Natural killer cell (primary cell): ENCODE measurements at regions of chr17 and their contacts with region 1.

Region 1: DNA sequence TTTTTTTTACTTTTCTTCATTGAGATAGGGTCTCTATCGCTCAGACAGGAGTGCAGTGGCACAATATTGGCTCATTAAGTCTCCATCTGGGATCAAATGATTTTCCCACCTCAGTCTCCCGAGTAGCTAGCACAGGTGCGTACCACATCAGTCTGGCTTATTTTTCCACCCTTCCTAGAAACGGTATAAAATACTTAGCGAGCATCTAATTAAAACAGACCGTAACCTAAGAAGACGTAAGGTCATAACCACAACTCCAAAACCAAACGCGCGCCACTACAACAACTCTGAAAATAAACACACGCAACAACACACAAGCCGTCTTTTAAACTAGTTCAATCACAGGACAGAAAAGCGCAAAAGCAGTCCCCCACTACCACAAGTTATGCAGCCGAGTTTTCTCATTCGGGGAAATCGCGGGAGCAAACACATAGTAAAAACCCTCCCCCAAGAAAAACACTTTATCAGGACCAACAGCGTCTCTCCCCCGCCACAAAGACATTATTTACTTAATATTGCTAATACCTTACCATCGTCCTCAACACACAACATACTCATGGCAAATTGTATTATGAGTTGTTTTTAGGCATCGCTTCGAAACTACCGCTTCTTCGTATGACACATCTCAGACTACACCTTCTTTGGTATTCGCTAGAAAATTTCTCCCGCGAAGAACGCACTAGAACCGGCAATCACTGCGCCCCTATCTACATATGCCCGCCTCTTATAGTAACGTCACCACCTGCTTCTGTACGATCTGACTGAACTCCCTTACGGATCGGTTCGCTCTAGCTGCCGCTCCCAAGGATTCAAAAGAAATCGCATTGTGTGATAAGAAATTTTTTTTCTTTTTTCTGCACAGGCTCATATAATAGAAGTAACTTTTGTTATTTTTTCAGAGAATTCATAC is 32.8 kb downstream of the TEX14 start:
- DNase-seq: peak; percentile 74 to 93
- ATAC-seq: peak; percentile 76 to 90 (median 83)
- H3K4me3 ChIP-seq: peak overlapping the region; percentile 43
- H3K4me3 Mint-ChIP-seq: peak overlapping the region; percentile 89
- H3K27ac ChIP-seq: peak overlapping the region; percentile 88
- H3K27ac Mint-ChIP-seq: peak overlapping the region; percentile 97 to 98
- H3K4me1 ChIP-seq: peaks cover 15% of the 10 kb centered on the region
- H3K4me1 Mint-ChIP-seq: peaks cover 18% of the 10 kb centered on the region in 2 donors
- H3K27me3 ChIP-seq: no peaks in the 10 kb centered on the region
- H3K27me3 Mint-ChIP-seq: peaks cover 0 to 3% of the 10 kb centered on the region in 2 donors
- CTCF ChIP-seq: no peak

Region 2: DNA sequence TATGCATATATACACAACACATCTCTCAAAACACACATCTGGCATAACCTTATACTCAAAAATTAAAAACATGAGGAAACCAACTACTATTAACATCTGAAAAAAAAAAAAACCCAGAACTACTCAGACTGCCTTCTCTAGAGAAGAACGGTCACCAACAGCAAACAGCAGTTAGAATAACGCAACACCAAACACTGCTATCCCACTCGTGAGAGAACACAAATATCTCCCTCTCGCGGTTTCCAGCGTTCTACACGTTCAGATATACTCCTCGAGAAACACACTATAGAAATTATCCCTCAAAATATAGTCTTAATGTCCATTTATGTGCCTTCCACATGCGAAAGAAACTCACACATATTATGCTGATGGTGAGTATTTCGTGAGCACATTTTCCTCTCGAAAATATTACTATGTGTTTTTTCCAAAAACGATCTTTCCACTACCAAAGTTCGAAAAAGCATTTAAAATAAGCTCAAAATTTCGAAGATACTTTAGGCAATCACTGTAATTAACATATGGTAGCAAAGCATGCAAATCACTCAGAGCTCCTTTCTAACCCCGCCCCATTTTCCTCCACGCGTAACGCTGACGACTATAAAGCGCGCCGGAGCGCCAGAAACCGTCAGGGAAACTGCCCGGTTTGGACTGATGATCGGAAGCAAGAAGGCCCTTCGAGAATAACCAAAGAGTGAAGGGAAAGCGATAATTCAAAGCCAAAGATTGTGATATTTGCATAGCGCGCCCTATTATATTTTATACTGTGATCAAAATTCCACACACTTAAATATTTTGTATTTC is 27.3 kb before region 1 on chr17:
- intact Hi-C with region 1: loop called (anchors 1 kb)
- DNase-seq: peak; percentile 96 to 97
- ATAC-seq: peak; percentile 82 to 92 (median 84)
- H3K4me3 ChIP-seq: peak overlapping the region; percentile 33
- H3K4me3 Mint-ChIP-seq: no peak overlapping the region
- H3K27ac ChIP-seq: peak overlapping the region; percentile 76
- H3K27ac Mint-ChIP-seq: no peak overlapping the region
- H3K4me1 ChIP-seq: peaks cover 10% of the 10 kb centered on the region
- H3K4me1 Mint-ChIP-seq: peaks cover 0 to 6% of the 10 kb centered on the region in 2 donors
- H3K27me3 ChIP-seq: no peaks in the 10 kb centered on the region
- H3K27me3 Mint-ChIP-seq: no peaks in the 10 kb centered on the region
- CTCF ChIP-seq: no peak

Region 3: GRCh38 chr17:58692239-58693055 is 33.4 kb after region 1 on chr17 and contains the start of gene RAD51C:
- intact Hi-C with region 1: loop called (anchors 1 kb)
- DNase-seq: peak; percentile 82 to 92
- ATAC-seq: peak; percentile 97 to 99 (median 99)
- H3K4me3 ChIP-seq: peak within 1 kb of the TSS; percentile 62
- H3K4me3 Mint-ChIP-seq: peak within 1 kb of the TSS; percentile 96
- H3K27ac ChIP-seq: peak within 1 kb of the TSS; percentile 74
- H3K27ac Mint-ChIP-seq: peak within 1 kb of the TSS; percentile 93
- H3K4me1 ChIP-seq: peaks cover 6% of the 10 kb centered on the region
- H3K4me1 Mint-ChIP-seq: peaks cover 20 to 21% of the 10 kb centered on the region in 2 donors
- H3K27me3 ChIP-seq: no peaks in the 10 kb centered on the region
- H3K27me3 Mint-ChIP-seq: peaks cover 2 to 5% of the 10 kb centered on the region in 2 donors
- CTCF ChIP-seq: no peak
- total RNA-seq, gene RAD51C: 13.4 to 18.9 (median 17.1) TPM

Region 4: DNA sequence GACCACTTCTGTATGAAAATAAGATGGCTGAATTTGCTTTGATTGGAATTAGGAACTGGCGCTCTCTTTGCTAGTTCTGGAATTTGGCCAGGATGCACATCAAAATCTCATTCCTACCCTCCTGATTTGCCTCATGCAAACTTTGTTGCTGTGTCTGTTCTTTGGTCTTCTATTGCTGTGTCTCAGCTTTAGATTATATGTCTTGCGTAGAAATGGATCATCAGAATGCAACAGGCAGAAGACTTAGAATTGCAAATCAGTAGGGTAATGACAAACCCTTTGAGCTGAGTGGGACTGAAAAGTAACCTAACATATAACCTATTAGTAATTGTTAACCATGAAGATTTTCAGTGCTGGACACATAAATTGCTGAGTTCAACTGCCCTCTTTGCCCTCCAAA is 63.6 kb after region 1 on chr17:
- intact Hi-C with region 1: no loop called
- DNase-seq: no peak
- ATAC-seq: no peak
- H3K4me3 ChIP-seq: no peak overlapping the region
- H3K4me3 Mint-ChIP-seq: no peak overlapping the region
- H3K27ac ChIP-seq: no peak overlapping the region
- H3K27ac Mint-ChIP-seq: no peak overlapping the region
- H3K4me1 ChIP-seq: no peaks in the 10 kb centered on the region
- H3K4me1 Mint-ChIP-seq: no peaks in the 10 kb centered on the region
- H3K27me3 ChIP-seq: no peaks in the 10 kb centered on the region
- H3K27me3 Mint-ChIP-seq: no peaks in the 10 kb centered on the region
- CTCF ChIP-seq: no peak